IMR-90 (cell line): ENCODE measurements at regions of chr16 and their contacts with region 1.

Region 1: DNA sequence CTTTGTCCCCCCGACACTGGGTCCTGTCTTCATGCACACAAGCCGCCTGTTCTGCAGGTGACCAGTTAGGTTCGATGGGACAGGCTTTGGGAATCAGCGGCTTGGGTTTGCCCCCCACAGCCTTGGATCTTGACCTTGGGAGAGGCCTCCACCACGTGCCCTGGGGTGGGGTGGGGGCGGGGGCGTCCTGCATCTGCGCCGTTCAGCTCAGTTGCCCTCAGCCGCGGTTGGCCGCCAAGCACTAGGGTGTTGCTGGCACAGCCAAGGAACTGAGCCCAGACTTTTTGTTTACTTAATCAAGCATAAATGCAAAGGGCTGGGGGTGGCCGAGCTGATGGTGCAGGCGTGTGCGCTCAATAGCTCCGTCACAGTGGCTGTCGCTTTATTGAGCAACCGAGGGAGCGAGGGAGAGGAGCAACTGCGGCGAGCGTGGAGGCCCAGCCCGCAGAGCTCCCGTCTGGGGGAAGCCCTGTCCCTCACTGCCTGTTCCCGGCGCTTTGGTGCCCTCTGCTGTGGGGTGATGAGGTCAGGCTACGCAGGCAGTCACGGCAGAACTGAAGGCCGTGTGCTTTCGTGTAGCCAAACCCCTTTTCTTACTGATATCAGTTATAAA is 33.9 kb downstream of the JPH3 start:
- DNase-seq: peak; percentile 64
- ATAC-seq: peak; percentile 97
- H3K4me3 ChIP-seq: no peak overlapping the region
- H3K27ac ChIP-seq: no peak overlapping the region
- H3K4me1 ChIP-seq: no peaks in the 10 kb centered on the region
- H3K27me3 ChIP-seq: peaks cover 38% of the 10 kb centered on the region
- CTCF ChIP-seq: peak; percentile 79
- POLR2A ChIP-seq: 0 out of 2 replicates have a peak, but pooled peaks have one; percentile 24
- RAD21 ChIP-seq: peak; percentile 91

Region 2: DNA sequence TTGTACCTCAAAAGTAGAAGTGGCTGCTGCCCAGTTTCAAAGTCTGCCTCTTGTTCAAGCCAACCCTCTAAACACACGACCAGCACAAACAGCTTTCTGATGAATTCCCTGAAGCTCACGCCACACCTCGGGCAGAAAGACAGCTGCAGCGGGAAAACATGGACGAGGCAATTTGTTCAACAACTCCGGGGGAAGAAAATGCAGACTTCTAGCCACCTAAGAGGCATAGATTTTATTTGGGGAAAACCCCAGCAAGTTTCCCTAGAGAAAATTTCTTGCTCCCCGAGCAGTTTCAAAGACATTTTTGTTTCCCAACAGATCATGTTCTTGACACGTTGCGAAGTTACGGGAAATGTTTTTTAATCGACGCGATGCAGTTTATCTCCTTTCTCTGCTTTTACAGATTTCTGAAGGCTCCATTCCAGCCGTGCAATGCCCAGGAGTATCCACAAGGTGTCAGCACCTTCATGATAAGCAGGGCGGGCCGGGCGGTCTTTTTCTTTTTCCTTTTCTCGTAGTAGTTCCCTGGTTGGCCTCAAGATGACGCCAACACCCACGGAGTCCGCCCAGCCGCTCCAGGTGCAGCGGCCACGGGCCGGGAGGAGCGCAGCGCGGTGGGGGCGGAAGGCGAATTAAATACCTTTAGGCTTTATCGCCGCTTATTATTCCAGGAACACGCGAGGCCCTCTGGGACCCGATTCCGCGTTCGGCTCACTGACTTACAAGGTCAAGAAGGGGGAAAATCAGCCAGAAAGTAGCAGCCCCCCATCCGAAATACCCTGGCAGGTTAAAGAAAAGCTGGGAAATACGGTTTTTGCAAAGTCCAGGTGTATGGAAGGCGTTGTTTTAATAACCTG is 1072.5 kb before region 1 on chr16:
- CTCF ChIA-PET with region 1: no interaction called
- POLR2A ChIA-PET with region 1: no interaction called
- dilution Hi-C with region 1: no loop called
- in situ Hi-C with region 1: no loop called
- intact Hi-C with region 1: loop called (anchors 10 kb)
- DNase-seq: peak; percentile 89
- ATAC-seq: peak; percentile 70
- H3K4me3 ChIP-seq: peak overlapping the region; percentile 32
- H3K27ac ChIP-seq: 0 out of 2 replicates have a peak overlapping the region, but pooled peaks have one; percentile 18
- H3K4me1 ChIP-seq: peaks cover 2% of the 10 kb centered on the region; the same call in 1 of the 2 replicates
- H3K27me3 ChIP-seq: no peaks in the 10 kb centered on the region
- CTCF ChIP-seq: peak; percentile 100
- POLR2A ChIP-seq: peak; percentile 67
- RAD21 ChIP-seq: peak; percentile 100

Region 3: GRCh38 chr16:87324411-87325275 is 311.5 kb before region 1 on chr16:
- CTCF ChIA-PET with region 1: no interaction called
- POLR2A ChIA-PET with region 1: no interaction called
- dilution Hi-C with region 1: no loop called
- in situ Hi-C with region 1: loop called (anchors 10 kb)
- intact Hi-C with region 1: loop called (anchors 10 kb)
- DNase-seq: peak; percentile 10
- ATAC-seq: peak; percentile 78
- H3K4me3 ChIP-seq: no peak overlapping the region
- H3K27ac ChIP-seq: no peak overlapping the region
- H3K4me1 ChIP-seq: peaks cover 6% of the 10 kb centered on the region; the same call in 1 of the 2 replicates
- H3K27me3 ChIP-seq: no peaks in the 10 kb centered on the region
- CTCF ChIP-seq: peak; percentile 66
- POLR2A ChIP-seq: no peak
- RAD21 ChIP-seq: peak; percentile 58

Region 4: GRCh38 chr16:87416826-87417527 is 219.2 kb before region 1 on chr16:
- CTCF ChIA-PET with region 1: interaction called, 10 read pairs
- POLR2A ChIA-PET with region 1: no interaction called
- dilution Hi-C with region 1: no loop called
- in situ Hi-C with region 1: loop called (anchors 5 kb)
- intact Hi-C with region 1: loop called (anchors 1 kb)
- DNase-seq: peak; percentile 72
- ATAC-seq: peak; percentile 65; the same call in 1 of the 2 replicates
- H3K4me3 ChIP-seq: no peak overlapping the region
- H3K27ac ChIP-seq: no peak overlapping the region
- H3K4me1 ChIP-seq: no peaks in the 10 kb centered on the region
- H3K27me3 ChIP-seq: no peaks in the 10 kb centered on the region
- CTCF ChIP-seq: peak; percentile 85
- POLR2A ChIP-seq: no peak
- RAD21 ChIP-seq: peak; percentile 85

Region 5: DNA sequence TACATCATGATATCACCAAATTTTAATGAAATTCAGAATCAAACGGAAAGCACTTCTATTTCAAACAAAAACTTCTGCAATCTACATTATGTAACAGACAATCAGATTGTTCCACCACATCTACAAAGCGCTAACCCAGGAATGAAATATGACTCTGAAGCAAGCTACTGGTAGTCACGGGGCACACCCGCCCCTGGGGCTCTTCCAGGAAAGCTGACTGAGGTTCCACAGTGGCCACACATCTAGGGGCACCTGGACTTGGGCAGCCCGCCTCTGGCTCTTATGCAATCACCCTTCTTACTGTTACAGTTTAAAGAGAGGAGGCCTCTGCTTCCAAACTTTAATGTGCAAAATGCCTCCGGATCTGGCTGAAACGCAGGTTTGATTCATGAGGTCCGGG is 170.9 kb before region 1 on chr16:
- CTCF ChIA-PET with region 1: no interaction called
- POLR2A ChIA-PET with region 1: no interaction called
- dilution Hi-C with region 1: no loop called
- in situ Hi-C with region 1: no loop called
- intact Hi-C with region 1: no loop called
- DNase-seq: peak; percentile 82
- ATAC-seq: peak; percentile 54
- H3K4me3 ChIP-seq: no peak overlapping the region
- H3K27ac ChIP-seq: peak overlapping the region; percentile 90
- H3K4me1 ChIP-seq: peaks cover 24% of the 10 kb centered on the region
- H3K27me3 ChIP-seq: no peaks in the 10 kb centered on the region
- CTCF ChIP-seq: no peak
- POLR2A ChIP-seq: peak; percentile 59; the same call in 1 of the 2 replicates
- RAD21 ChIP-seq: no peak

Region 6: DNA sequence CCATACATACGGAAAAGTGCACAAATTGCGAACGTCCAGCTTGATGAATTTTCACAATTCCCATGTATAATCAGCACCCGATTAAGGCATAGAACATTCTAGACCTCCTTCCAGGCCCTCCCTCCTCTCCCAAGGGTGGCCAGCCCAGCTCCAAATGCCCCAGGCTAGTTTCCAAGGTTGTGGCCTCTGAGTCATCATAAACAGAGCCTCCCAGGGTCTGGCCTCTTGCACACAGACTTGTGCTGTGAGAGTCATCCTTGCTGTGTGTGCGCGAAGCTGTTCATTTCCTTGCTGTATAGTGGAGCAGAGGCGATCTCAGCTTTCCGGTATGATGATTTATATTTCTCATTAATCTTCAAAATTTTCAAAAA is 54.4 kb before region 1 on chr16:
- CTCF ChIA-PET with region 1: interaction called, 10 read pairs
- POLR2A ChIA-PET with region 1: no interaction called
- dilution Hi-C with region 1: no loop called
- in situ Hi-C with region 1: no loop called
- intact Hi-C with region 1: no loop called
- DNase-seq: peak; percentile 98
- ATAC-seq: peak; percentile 90
- H3K4me3 ChIP-seq: no peak overlapping the region
- H3K27ac ChIP-seq: peak overlapping the region; percentile 94
- H3K4me1 ChIP-seq: peaks cover 26% of the 10 kb centered on the region
- H3K27me3 ChIP-seq: peaks cover 3% of the 10 kb centered on the region; the same call in 1 of the 2 replicates
- CTCF ChIP-seq: no peak
- POLR2A ChIP-seq: no peak
- RAD21 ChIP-seq: no peak